HEK293 (cell line): ENCODE measurements at regions of chr21 and their contacts with region 1.

Region 1: GRCh38 chr21:28745131-28746016 is 247.3 kb downstream of the LTN1 start:
- H3K4me3 ChIP-seq: peak overlapping the region; percentile 32
- H3K27ac ChIP-seq: no peak overlapping the region
- H3K4me1 ChIP-seq: no peaks in the 10 kb centered on the region; the same call in 1 of the 2 replicates
- CTCF ChIP-seq: peak; percentile 95

Region 2: DNA sequence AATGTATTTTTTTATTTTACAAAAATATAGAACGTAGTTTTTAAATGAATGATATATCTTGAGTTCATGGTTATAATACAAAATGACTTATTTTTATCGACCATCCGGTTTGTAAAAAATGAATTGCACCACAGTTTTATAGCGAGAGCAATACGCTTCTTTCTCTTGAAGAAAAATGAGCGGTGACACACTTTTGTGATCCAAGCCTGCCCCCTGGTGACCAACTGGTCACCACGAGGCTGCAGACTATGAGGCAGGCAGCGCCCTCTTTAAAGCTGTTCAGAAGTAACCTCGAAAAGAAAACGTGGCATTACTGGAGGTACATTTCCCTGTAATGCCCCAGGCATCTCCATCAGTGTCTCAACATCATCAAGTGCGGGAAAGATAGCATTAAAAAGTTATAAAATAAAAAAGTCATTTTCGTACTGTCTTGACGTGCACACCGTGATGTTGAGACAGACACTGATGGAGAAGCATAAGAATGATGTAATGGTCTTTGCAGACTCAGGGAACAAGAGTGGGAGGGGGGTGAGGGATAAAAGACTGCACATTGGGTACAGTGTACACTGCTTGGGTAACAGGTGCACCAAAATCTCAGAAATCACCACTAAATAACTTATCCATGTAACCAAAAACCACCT is 1044.3 kb before region 1 on chr21:
- CTCF ChIA-PET with region 1: interaction called, 31 read pairs
- POLR2A ChIA-PET with region 1: no interaction called
- H3K4me3 ChIP-seq: no peak overlapping the region; the same call in 1 of the 2 replicates
- H3K27ac ChIP-seq: no peak overlapping the region
- H3K4me1 ChIP-seq: no peaks in the 10 kb centered on the region
- CTCF ChIP-seq: peak; percentile 60

Region 3: GRCh38 chr21:28516991-28517592 is 228.3 kb before region 1 on chr21:
- CTCF ChIA-PET with region 1: interaction called, 43 read pairs
- POLR2A ChIA-PET with region 1: no interaction called
- H3K4me3 ChIP-seq: no peak overlapping the region
- H3K27ac ChIP-seq: no peak overlapping the region
- H3K4me1 ChIP-seq: no peaks in the 10 kb centered on the region
- CTCF ChIP-seq: peak; percentile 55; the same call in 1 of the 2 replicates

Region 4: GRCh38 chr21:28617300-28617699 is 128.1 kb before region 1 on chr21:
- CTCF ChIA-PET with region 1: interaction called, 13 read pairs
- POLR2A ChIA-PET with region 1: no interaction called
- H3K4me3 ChIP-seq: no peak overlapping the region
- H3K27ac ChIP-seq: no peak overlapping the region
- H3K4me1 ChIP-seq: no peaks in the 10 kb centered on the region
- CTCF ChIP-seq: no peak

Region 5: GRCh38 chr21:28675331-28676041 is 69.9 kb before region 1 on chr21:
- CTCF ChIA-PET with region 1: no interaction called
- POLR2A ChIA-PET with region 1: no interaction called
- H3K4me3 ChIP-seq: no peak overlapping the region
- H3K27ac ChIP-seq: no peak overlapping the region
- H3K4me1 ChIP-seq: no peaks in the 10 kb centered on the region
- CTCF ChIP-seq: no peak

Region 6: DNA sequence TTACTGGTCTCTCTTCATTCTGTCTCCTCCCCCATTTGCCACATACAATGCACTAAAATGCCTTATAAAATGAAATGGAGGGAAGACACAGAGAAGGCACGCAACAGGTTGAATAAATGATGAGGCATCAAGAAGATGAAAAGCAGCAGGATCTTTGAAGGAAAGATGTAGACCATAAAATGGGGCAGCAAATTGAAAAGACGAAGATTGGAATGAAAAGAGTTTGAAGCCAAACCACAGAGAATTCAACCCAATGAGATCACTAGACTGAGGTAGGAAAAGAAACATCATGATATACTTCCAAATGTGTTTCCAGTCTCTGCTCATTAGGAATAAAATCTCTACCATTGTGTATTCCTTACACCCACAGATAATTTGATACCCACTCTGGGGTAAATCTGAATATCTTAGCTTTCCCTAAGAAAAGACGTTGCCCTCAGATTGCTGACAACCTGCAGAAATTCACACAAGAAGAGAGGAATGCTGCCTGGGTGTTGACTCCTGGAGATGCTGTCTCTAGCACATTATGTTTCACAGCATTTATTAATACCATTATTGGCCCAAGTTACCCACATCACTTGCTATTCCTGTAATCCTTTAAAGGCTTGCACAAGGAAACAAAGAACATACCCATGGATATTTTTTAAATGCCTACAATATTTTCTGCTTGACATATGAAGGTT is 16.4 kb after region 1 on chr21:
- CTCF ChIA-PET with region 1: interaction called, 18 read pairs
- POLR2A ChIA-PET with region 1: no interaction called
- H3K4me3 ChIP-seq: no peak overlapping the region
- H3K27ac ChIP-seq: no peak overlapping the region
- H3K4me1 ChIP-seq: no peaks in the 10 kb centered on the region
- CTCF ChIP-seq: no peak

Region 7: GRCh38 chr21:28938726-28939125 is 193.4 kb after region 1 on chr21:
- CTCF ChIA-PET with region 1: interaction called, 41 read pairs
- POLR2A ChIA-PET with region 1: no interaction called
- H3K4me3 ChIP-seq: no peak overlapping the region
- H3K27ac ChIP-seq: no peak overlapping the region
- H3K4me1 ChIP-seq: no peaks in the 10 kb centered on the region
- CTCF ChIP-seq: no peak